Tibial artery (tissue), 4 donors: ENCODE measurements at regions of chr22 and their contacts with region 1.

Region 1: GRCh38 chr22:17552737-17553136 is 10.6 kb upstream of the SLC25A18 start:
- DNase-seq: no peak
- H3K4me3 ChIP-seq: no peak overlapping the region
- H3K27ac ChIP-seq: no peak overlapping the region
- H3K4me1 ChIP-seq: no peaks in the 10 kb centered on the region
- H3K27me3 ChIP-seq: no peaks in the 10 kb centered on the region
- CTCF ChIP-seq: no peak

Region 2: DNA sequence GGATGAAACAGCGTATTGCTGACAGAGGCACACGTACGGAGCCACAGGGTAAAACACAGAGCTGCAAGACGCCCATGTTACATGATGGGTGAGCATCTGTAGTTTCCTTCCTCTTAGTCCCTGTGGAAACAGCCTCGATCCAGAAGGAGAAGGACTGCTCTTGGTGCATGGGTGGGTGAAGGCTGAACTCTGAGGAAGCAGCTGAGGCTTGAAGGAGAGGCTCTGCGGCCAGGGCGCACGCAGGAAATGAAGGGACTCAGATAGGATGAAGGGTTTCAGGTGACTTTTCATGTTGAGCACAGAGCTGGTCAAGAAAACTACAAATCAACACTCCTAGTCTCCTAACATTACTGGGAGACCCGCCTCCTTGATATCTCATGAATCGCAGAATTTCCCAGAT is 267.8 kb before region 1 on chr22:
- intact Hi-C with region 1: no loop called
- DNase-seq: no peak
- H3K4me3 ChIP-seq: no peak overlapping the region
- H3K27ac ChIP-seq: no peak overlapping the region
- H3K4me1 ChIP-seq: no peaks in the 10 kb centered on the region
- H3K27me3 ChIP-seq: peaks cover 0 to 11% of the 10 kb centered on the region in 2 donors
- CTCF ChIP-seq: no peak

Region 3: DNA sequence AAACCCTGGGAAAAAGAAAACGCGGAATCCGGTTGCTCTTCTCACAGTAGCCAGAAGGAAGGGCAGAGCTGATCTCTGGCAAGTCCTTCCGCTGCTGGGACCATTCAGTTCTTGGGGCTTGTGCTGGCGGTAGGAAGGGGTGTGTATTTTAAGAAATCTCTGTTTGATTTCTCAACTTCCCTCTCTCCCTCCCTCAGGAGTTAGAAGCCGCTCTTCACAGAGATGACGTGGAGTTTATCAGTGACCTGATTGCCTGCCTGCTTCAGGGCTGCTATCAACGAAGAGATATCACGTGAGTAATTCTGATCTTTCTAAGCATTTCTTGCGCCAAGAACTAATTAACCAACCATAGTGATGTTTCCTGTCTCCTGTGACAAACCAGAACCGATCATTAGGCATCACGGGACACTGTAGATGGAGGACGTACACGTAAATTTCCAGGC is 75.3 kb before region 1 on chr22:
- intact Hi-C with region 1: no loop called
- DNase-seq: no peak
- H3K4me3 ChIP-seq: no peak overlapping the region
- H3K27ac ChIP-seq: no peak overlapping the region
- H3K4me1 ChIP-seq: no peaks in the 10 kb centered on the region
- H3K27me3 ChIP-seq: peaks cover 0 to 28% of the 10 kb centered on the region in 2 donors
- CTCF ChIP-seq: no peak

Region 4: GRCh38 chr22:17785185-17786184 is 232.7 kb after region 1 on chr22:
- intact Hi-C with region 1: loop called (anchors 10 kb)
- DNase-seq: peak in 1 of 2 donors; percentile 46
- H3K4me3 ChIP-seq: no peak overlapping the region
- H3K27ac ChIP-seq: no peak overlapping the region
- H3K4me1 ChIP-seq: peaks cover 0 to 27% (median 12%) of the 10 kb centered on the region in 4 donors
- H3K27me3 ChIP-seq: peaks cover 0 to 4% of the 10 kb centered on the region in 2 donors
- CTCF ChIP-seq: peak; percentile 34 to 36